ENCODE measurements at regions of chr12 and their contacts with region 1.

Region 1: GRCh38 chr12:6723607-6724396 is at the start of gene COPS7A:
- DNase-seq: peak; percentile 97
- H3K4me3 ChIP-seq: peak within 1 kb of the TSS; percentile 59 to 74 (median 72)
- H3K27ac ChIP-seq: peak within 1 kb of the TSS; percentile 88 to 91
- H3K4me1 ChIP-seq: peaks cover 6 to 7% of the 10 kb centered on the region in 2 donors
- H3K27me3 ChIP-seq: no peaks in the 10 kb centered on the region
- CTCF ChIP-seq: no peak
- POLR2A ChIP-seq: peak; percentile 30
- total RNA-seq, gene COPS7A: 52.1 to 72.2 (median 59.9) TPM

Region 2: GRCh38 chr12:6688999-6689882 is 34.6 kb before region 1 on chr12 and contains the start of gene ZNF384:
- intact Hi-C with region 1: loop called (anchors 2 kb)
- DNase-seq: peak; percentile 95 to 97
- H3K4me3 ChIP-seq: peak within 1 kb of the TSS; percentile 80 to 99 (median 97)
- H3K27ac ChIP-seq: peak within 1 kb of the TSS; percentile 98 to 99
- H3K4me1 ChIP-seq: peaks cover 3 to 18% of the 10 kb centered on the region in 2 donors
- H3K27me3 ChIP-seq: no peaks in the 10 kb centered on the region
- CTCF ChIP-seq: peak; percentile 39 to 76 (median 55)
- POLR2A ChIP-seq: peak; percentile 31
- total RNA-seq, gene ZNF384: 34.4 to 57.0 (median 49.5) TPM

Region 3: DNA sequence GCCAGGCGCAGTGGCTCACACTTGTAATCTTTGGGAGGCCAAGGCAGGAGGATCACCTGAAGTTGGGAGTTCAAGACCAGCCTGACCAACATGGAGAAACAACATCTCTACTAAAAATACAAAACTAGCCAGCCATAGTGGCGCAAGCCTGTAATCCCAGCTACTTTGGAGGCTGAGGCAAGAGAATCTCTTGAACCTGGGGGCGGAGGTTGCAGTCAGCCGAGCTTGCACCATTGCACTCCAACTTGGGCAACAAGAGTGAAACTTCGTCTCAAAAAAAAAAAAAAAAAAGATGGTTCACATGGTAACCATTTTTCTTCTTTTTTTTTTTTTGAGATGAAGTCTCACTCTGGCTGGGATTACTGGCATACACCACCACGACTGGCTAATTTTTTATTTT is 1113.6 kb after region 1 on chr12:
- intact Hi-C with region 1: no loop called
- DNase-seq: no peak
- H3K4me3 ChIP-seq: no peak overlapping the region
- H3K27ac ChIP-seq: no peak overlapping the region
- H3K4me1 ChIP-seq: no peaks in the 10 kb centered on the region
- H3K27me3 ChIP-seq: no peaks in the 10 kb centered on the region
- CTCF ChIP-seq: no peak
- POLR2A ChIP-seq: no peak